Vagina (tissue), 2 donors: ENCODE measurements at regions of chr19 and their contacts with region 1.

Region 1: GRCh38 chr19:18416778-18417249 is 2.4 kb upstream of the SSBP4 start:
- DNase-seq: no peak
- H3K4me3 ChIP-seq: peak overlapping the region; percentile 48 to 66
- H3K27ac ChIP-seq: peak overlapping the region; percentile 97
- H3K4me1 ChIP-seq: peaks cover 71% of the 10 kb centered on the region
- H3K27me3 ChIP-seq: no peaks in the 10 kb centered on the region
- CTCF ChIP-seq: no peak
- POLR2A ChIP-seq: peak in 1 of 2 donors; percentile 15

Region 2: DNA sequence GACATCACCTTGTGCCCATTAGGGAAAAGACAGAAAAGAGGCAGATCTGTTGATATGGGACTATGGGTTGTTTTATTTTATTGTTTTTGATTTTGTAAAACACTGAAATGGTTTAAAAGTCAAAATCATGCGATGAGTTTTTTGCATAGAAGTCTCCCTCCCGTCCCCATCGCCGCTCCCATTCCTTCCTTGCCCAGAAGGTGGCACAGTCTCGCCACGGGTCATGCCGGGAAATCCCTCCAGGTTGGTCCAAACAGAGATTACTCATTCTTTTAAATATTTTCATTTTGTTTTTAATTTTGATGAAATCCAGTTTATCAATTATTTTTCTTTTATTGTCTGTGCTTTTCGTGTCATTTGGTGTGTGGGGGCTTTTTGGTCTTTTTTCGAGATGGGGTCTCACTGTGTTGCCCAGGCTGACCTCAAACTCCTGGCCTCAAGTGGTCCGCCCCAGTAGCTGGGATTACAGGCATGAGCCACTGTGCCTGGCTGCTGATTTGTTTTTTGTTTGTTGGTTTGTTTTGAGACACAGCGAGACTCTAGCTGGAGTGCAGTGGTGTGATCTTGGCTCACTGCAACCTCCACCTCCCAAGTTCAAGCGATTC is 67.2 kb before region 1 on chr19:
- intact Hi-C with region 1: loop called (anchors 5 kb)
- DNase-seq: no peak
- H3K4me3 ChIP-seq: no peak overlapping the region
- H3K27ac ChIP-seq: no peak overlapping the region
- H3K4me1 ChIP-seq: no peaks in the 10 kb centered on the region
- H3K27me3 ChIP-seq: no peaks in the 10 kb centered on the region
- CTCF ChIP-seq: peak; percentile 66 to 78 (median 67)
- POLR2A ChIP-seq: no peak